ENCODE measurements at regions of chr12 and their contacts with region 1.

Region 1: DNA sequence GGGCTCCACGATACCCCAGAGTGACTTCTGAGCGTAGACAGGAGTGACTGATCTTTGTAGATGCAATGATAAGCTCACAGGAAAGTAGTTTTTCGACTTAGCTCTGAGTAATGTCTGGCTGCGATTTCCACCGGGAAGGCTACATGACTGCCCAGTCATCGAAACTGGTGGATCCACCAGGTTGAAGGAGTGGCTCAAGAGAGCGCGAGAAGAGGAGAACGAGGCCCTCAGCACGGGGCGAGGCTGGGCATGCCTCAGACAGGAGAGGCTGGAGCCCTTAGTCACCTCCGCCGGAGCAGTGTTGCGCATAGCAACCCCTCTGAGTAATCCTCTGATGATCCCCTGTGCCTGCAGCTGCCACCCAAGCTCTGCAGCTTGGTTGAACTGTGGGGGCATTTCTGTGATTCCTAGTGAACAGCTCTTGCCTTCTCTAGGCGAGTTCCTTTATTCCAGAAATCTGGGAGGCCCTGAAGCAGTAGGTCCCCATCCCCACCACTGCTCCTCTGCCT is 25.6 kb downstream of the ELK3 start:
- DNase-seq: no peak
- ATAC-seq: no peak
- H3K4me3 ChIP-seq: no peak overlapping the region
- H3K27ac ChIP-seq: no peak overlapping the region
- H3K4me1 ChIP-seq: peaks cover 13% of the 10 kb centered on the region
- H3K27me3 ChIP-seq: no peaks in the 10 kb centered on the region
- CTCF ChIP-seq: no peak
- EP300 ChIP-seq: no peak
- POLR2A ChIP-seq: no peak
- RAD21 ChIP-seq: no peak

Region 2: DNA sequence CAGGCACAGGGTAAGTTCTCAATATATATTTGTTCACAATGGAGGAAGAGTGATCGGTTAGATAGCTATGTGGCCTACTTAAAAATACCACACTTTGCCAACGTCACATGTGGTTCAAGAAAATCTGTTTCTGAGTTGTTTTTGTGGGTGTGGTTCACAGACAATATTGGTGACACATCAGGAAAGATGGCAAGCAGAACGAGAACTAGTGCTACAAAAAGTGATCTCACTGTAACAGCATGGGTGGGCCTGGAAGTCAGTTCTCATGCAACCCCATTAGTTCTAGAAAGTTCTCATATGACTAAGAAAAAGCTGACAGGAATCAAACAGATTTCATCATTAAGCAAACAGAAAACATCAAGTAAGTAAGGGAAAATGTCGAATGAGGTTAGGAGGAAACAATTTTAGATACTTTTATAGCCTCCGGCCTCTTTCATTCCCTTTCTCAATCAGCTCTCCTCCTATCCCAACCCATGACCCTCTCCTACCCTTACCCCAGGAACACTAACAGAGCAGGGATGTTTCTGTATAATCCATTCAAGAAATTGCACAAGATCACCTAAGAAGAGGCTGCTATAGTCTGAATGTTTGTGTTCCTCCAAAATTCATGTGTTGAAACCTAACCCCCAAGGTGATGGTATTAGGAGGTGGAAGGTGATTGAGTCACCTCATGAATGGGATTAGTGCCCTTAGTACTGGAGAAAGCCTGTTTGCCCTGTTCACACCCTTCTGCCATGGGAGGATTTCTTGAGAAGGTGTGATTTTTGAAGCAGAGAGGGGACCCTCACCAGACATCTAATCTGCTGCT is 413.7 kb before region 1 on chr12:
- CTCF ChIA-PET with region 1: no interaction called
- POLR2A ChIA-PET with region 1: no interaction called
- RAD21 ChIA-PET with region 1: no interaction called
- SMC1A ChIA-PET with region 1: no interaction called
- in situ Hi-C with region 1: no loop called
- intact Hi-C with region 1: no loop called
- DNase-seq: no peak
- ATAC-seq: no peak
- H3K4me3 ChIP-seq: no peak overlapping the region
- H3K27ac ChIP-seq: no peak overlapping the region
- H3K4me1 ChIP-seq: no peaks in the 10 kb centered on the region
- H3K27me3 ChIP-seq: no peaks in the 10 kb centered on the region; a peak in 2 of 4 replicates
- CTCF ChIP-seq: no peak
- EP300 ChIP-seq: no peak
- POLR2A ChIP-seq: no peak
- RAD21 ChIP-seq: no peak

Region 3: GRCh38 chr12:95918194-95918993 is 301.4 kb before region 1 on chr12:
- CTCF ChIA-PET with region 1: interaction called, 24 read pairs
- POLR2A ChIA-PET with region 1: no interaction called
- RAD21 ChIA-PET with region 1: interaction called, 13 read pairs
- SMC1A ChIA-PET with region 1: interaction called, 12 read pairs
- in situ Hi-C with region 1: loop called (anchors 10 kb)
- intact Hi-C with region 1: loop called (anchors 1 kb)
- DNase-seq: no peak
- ATAC-seq: peak; percentile 99
- H3K4me3 ChIP-seq: no peak overlapping the region
- H3K27ac ChIP-seq: no peak overlapping the region
- H3K4me1 ChIP-seq: no peaks in the 10 kb centered on the region
- H3K27me3 ChIP-seq: peaks cover 2 to 3% of the 10 kb centered on the region in 2 experiments; a peak in 3 of 4 replicates
- CTCF ChIP-seq: peak; percentile 77 to 84 (median 80)
- EP300 ChIP-seq: no peak
- POLR2A ChIP-seq: no peak
- RAD21 ChIP-seq: peak; percentile 74

Region 4: DNA sequence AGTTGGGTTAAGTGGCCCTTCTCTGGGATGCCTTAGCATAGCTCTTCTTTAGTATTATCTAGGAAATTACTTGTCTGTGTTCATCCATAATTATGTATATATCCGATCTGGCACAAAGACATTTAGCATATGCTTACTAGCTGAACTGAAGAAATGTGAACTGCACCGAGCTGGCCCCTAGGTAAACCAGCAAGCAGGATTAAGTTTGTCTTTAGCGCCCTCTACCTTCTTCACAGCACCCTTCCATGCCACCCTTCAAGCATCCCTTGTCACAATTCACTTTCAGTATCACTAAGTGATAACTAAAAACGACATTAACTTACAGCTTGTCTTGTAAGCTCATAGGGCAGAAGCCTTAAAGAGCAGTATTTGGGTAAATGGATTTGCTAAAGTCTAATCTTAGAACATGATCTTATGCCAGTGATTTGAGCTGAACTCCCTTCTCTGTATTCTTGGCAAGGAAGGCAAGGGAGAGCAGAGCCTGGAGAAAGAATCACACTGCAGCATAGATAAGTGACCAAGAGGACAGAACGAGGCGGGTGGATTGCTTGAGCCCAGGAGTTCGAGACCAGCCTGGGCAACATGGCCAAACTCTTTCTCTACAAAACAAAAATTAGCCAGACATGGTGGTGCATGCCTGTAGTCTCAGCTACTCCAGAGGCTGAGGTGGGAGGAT is 221.0 kb before region 1 on chr12:
- CTCF ChIA-PET with region 1: interaction called, 17 read pairs
- POLR2A ChIA-PET with region 1: no interaction called
- RAD21 ChIA-PET with region 1: interaction called, 10 read pairs
- SMC1A ChIA-PET with region 1: interaction called, 3 read pairs
- in situ Hi-C with region 1: no loop called
- intact Hi-C with region 1: no loop called
- DNase-seq: peak; percentile 34
- ATAC-seq: peak; percentile 99
- H3K4me3 ChIP-seq: no peak overlapping the region
- H3K27ac ChIP-seq: no peak overlapping the region
- H3K4me1 ChIP-seq: no peaks in the 10 kb centered on the region
- H3K27me3 ChIP-seq: no peaks in the 10 kb centered on the region
- CTCF ChIP-seq: peak; percentile 69 to 79 (median 73); a peak in 5 of 6 replicates
- EP300 ChIP-seq: no peak
- POLR2A ChIP-seq: no peak
- RAD21 ChIP-seq: peak; percentile 69

Region 5: DNA sequence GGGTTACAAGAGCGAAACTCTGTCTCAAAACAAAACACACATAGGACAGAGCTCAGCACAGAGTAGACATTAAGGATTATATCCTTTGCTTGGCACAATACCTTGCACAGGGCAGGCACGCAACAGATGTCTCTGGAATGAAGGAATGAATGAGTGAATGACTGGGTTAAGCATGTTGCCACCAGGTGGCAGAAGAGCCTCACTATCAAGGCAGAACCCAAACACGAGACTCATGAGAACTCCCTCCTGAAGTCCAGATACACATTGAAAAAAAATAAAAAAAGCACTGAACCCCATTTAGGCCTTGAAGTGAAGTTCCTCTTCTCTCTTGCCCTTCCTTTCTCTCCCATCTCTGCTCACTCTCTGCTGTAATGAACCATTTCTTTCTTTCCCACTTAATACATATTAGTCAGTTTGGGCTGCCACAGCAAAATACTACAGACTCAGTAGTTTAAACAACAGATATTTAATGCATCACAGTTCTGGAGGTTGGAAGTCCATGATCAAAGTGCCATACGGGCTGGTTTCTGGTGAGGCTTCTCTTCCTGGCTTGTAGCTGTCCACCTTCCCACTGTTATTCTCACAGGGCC is 157.8 kb before region 1 on chr12:
- CTCF ChIA-PET with region 1: interaction called, 167 read pairs
- POLR2A ChIA-PET with region 1: no interaction called
- RAD21 ChIA-PET with region 1: interaction called, 42 read pairs
- SMC1A ChIA-PET with region 1: interaction called, 90 read pairs
- in situ Hi-C with region 1: loop called (anchors 5 kb)
- intact Hi-C with region 1: loop called (anchors 1 kb)
- DNase-seq: peak; percentile 79
- ATAC-seq: peak; percentile 96
- H3K4me3 ChIP-seq: no peak overlapping the region
- H3K27ac ChIP-seq: no peak overlapping the region
- H3K4me1 ChIP-seq: peaks cover 4% of the 10 kb centered on the region; the same call in 1 of the 2 replicates
- H3K27me3 ChIP-seq: no peaks in the 10 kb centered on the region
- CTCF ChIP-seq: peak; percentile 67 to 88 (median 81); a peak in 5 of 6 replicates
- EP300 ChIP-seq: no peak
- POLR2A ChIP-seq: no peak
- RAD21 ChIP-seq: peak; percentile 91

Region 6: GRCh38 chr12:96132819-96133218 is 86.9 kb before region 1 on chr12:
- CTCF ChIA-PET with region 1: interaction called, 9 read pairs
- POLR2A ChIA-PET with region 1: no interaction called
- RAD21 ChIA-PET with region 1: interaction called, 7 read pairs
- SMC1A ChIA-PET with region 1: interaction called, 10 read pairs
- in situ Hi-C with region 1: no loop called
- intact Hi-C with region 1: no loop called
- DNase-seq: no peak
- ATAC-seq: peak; percentile 64; the same call in 2 of the 3 replicates
- H3K4me3 ChIP-seq: no peak overlapping the region
- H3K27ac ChIP-seq: no peak overlapping the region
- H3K4me1 ChIP-seq: no peaks in the 10 kb centered on the region
- H3K27me3 ChIP-seq: peaks cover 2% of the 10 kb centered on the region in 2 experiments; a peak in 1 of 4 replicates
- CTCF ChIP-seq: peak in 1 of 3 experiments; percentile 25; a peak in 2 of 6 replicates
- EP300 ChIP-seq: no peak
- POLR2A ChIP-seq: no peak
- RAD21 ChIP-seq: peak; percentile 39

Region 7: GRCh38 chr12:96201272-96202227 is 18.2 kb before region 1 on chr12:
- CTCF ChIA-PET with region 1: interaction called, 18 read pairs
- POLR2A ChIA-PET with region 1: no interaction called
- RAD21 ChIA-PET with region 1: interaction called, 25 read pairs
- SMC1A ChIA-PET with region 1: interaction called, 25 read pairs
- in situ Hi-C with region 1: no loop called
- intact Hi-C with region 1: no loop called
- DNase-seq: no peak
- ATAC-seq: no peak
- H3K4me3 ChIP-seq: no peak overlapping the region
- H3K27ac ChIP-seq: no peak overlapping the region
- H3K4me1 ChIP-seq: peaks cover 9% of the 10 kb centered on the region
- H3K27me3 ChIP-seq: no peaks in the 10 kb centered on the region
- CTCF ChIP-seq: no peak
- EP300 ChIP-seq: no peak
- POLR2A ChIP-seq: no peak
- RAD21 ChIP-seq: no peak